ENCODE measurements at regions of chr2 and their contacts with region 1.

Region 1: GRCh38 chr2:187574969-187575750 is 20.9 kb upstream of the TFPI start:
- DNase-seq: no peak

Region 2: DNA sequence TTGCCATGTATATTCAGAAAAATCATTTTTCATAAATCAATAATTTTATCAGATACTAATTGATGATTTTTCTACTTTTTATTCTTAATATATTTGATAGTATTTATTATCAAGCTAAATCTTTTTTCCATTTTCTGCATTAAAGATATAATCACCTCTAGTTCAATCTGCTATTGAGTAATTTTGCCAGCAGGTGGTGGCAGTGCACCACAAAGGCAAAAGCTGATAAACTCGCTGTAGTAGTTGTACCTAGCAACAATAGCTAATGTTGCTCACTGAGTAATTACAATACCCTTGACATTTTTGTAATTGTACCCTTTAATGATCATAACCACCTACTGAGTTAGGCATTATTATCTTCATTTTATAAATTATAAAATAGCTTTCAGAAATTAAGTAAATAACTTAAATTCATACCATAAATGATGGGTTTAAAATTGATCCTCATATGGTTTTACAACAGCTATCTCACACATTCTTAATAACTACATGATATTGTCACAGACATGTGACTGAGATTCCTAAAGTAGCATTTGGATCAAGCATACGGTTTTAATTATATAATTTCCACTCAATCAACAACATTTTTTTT is 75.1 kb before region 1 on chr2:
- intact Hi-C with region 1: loop called (anchors 5 kb)
- DNase-seq: peak; percentile 22 to 84 (median 60)